ENCODE measurements at regions of chr4 and their contacts with region 1.

Region 1: DNA sequence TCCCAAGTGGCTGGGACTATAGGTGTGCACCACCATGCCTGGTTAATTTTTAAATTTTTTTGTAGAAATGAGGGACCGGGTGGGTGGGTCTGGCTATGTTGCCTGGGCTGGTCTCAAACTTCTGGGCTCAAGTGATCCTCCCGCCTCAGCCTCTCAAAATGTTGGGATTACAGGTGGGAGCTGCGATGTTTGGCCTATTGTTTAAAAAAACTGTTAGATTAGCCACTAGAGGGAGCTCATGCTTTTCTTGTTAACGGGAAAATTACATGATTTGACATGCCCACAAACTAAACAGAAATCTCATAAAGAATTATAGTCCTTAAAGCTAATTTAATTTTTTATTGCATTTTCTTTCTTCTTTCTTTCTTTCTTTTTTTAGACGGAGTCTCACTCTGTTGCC is 5.0 kb upstream of the SDAD1 start:
- DNase-seq: no peak
- H3K4me3 Mint-ChIP-seq: no peak overlapping the region
- H3K27ac Mint-ChIP-seq: no peak overlapping the region
- H3K4me1 Mint-ChIP-seq: peaks cover 8% of the 10 kb centered on the region
- H3K27me3 Mint-ChIP-seq: peaks cover 4% of the 10 kb centered on the region

Region 2: DNA sequence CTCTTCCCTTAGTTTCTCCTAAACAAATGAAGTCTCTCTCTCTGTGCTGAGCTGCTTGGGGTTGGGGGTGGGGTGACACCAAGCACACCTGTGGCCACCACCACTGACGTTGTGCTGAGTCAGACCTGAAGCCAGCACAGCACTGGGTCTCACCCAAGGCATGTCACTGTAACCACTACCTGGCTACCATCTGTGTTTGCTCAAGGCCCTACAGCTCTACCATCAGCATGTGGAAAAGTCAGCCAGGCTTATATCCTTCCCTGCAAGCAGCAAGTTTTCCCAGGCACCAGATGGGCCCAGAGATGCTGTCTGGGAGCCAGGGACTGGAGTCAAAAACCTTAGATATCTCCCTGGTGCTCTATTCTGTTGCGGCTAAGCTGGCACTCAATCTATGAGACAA is 20.7 kb after region 1 on chr4:
- CTCF ChIA-PET with region 1: interaction called, 17 read pairs
- DNase-seq: no peak
- H3K4me3 Mint-ChIP-seq: no peak overlapping the region
- H3K27ac Mint-ChIP-seq: no peak overlapping the region
- H3K4me1 Mint-ChIP-seq: no peaks in the 10 kb centered on the region
- H3K27me3 Mint-ChIP-seq: no peaks in the 10 kb centered on the region

Region 3: GRCh38 chr4:76055016-76055415 is 59.3 kb after region 1 on chr4:
- CTCF ChIA-PET with region 1: interaction called, 24 read pairs
- DNase-seq: no peak
- H3K4me3 Mint-ChIP-seq: no peak overlapping the region
- H3K27ac Mint-ChIP-seq: no peak overlapping the region
- H3K4me1 Mint-ChIP-seq: peaks cover 28% of the 10 kb centered on the region
- H3K27me3 Mint-ChIP-seq: no peaks in the 10 kb centered on the region

Region 4: GRCh38 chr4:76061982-76062381 is 66.3 kb after region 1 on chr4:
- CTCF ChIA-PET with region 1: interaction called, 50 read pairs
- DNase-seq: no peak
- H3K4me3 Mint-ChIP-seq: no peak overlapping the region
- H3K27ac Mint-ChIP-seq: no peak overlapping the region
- H3K4me1 Mint-ChIP-seq: peaks cover 16% of the 10 kb centered on the region
- H3K27me3 Mint-ChIP-seq: no peaks in the 10 kb centered on the region

Region 5: DNA sequence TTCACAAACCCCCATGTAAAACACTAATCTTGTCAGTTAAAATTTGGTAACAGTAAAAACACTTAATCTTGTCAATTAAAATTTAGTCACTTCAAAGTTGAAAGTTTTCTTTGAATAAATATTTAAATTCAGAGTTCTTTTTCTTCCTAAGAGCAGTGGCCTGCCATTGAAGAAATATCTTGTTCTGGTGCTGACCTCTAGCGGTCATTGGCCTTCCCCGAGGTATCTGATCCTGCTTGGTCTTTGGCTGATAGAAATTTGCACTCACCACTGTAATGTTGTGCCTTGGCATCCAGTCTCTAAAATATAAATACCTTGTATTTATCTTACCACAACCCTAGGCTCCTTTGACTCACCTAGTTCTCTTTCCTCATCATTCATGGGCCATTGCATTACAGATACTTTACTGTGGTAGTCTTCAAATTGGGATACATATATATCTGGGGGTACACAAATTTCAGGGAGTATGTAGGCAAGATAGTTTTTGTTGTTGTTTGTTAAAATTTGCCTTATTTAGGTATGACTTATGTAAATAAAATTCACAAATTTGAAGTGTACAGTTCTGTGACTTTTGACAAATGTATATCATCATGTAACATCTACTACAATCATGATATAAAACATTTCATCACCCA is 72.0 kb after region 1 on chr4:
- CTCF ChIA-PET with region 1: interaction called, 50 read pairs
- DNase-seq: peak; percentile 81
- H3K4me3 Mint-ChIP-seq: no peak overlapping the region
- H3K27ac Mint-ChIP-seq: no peak overlapping the region
- H3K4me1 Mint-ChIP-seq: no peaks in the 10 kb centered on the region
- H3K27me3 Mint-ChIP-seq: no peaks in the 10 kb centered on the region

Region 6: GRCh38 chr4:76087007-76087769 is 91.5 kb after region 1 on chr4:
- CTCF ChIA-PET with region 1: interaction called, 37 read pairs
- DNase-seq: peak; percentile 27
- H3K4me3 Mint-ChIP-seq: no peak overlapping the region
- H3K27ac Mint-ChIP-seq: no peak overlapping the region
- H3K4me1 Mint-ChIP-seq: peaks cover 3% of the 10 kb centered on the region
- H3K27me3 Mint-ChIP-seq: peaks cover 4% of the 10 kb centered on the region

Measured in activated naive CD4-positive, alpha-beta T cell treated with anti-CD3 and anti-CD28 coated beads, Interleukin-2, amount 10 ng/mL, durations not matched to agents 7 days and 5 days (primary cell).